ENCODE measurements at regions of chr20 and their contacts with region 1.

Region 1: GRCh38 chr20:1894951-1895673 is at the start of gene SIRPA:
- DNase-seq: peak in 1 of 2 donors; percentile 84
- H3K4me3 ChIP-seq: peak within 1 kb of the TSS; percentile 80 to 97
- H3K27ac ChIP-seq: peak within 1 kb of the TSS; percentile 97
- H3K4me1 ChIP-seq: peaks cover 6 to 66% of the 10 kb centered on the region in 2 donors
- H3K27me3 ChIP-seq: no peaks in the 10 kb centered on the region
- CTCF ChIP-seq: no peak
- total RNA-seq, gene SIRPA: 72.8 TPM

Region 2: GRCh38 chr20:1802385-1803060 is 92.6 kb before region 1 on chr20:
- intact Hi-C with region 1: loop called (anchors 1 kb)
- DNase-seq: peak in 1 of 2 donors; percentile 83
- H3K4me3 ChIP-seq: peak overlapping the region; percentile 74 to 76
- H3K27ac ChIP-seq: peak overlapping the region; percentile 52 to 69
- H3K4me1 ChIP-seq: peaks cover 4 to 6% of the 10 kb centered on the region in 2 donors
- H3K27me3 ChIP-seq: no peaks in the 10 kb centered on the region
- CTCF ChIP-seq: peak; percentile 65 to 87 (median 67)

Region 3: GRCh38 chr20:1816384-1817381 is 78.4 kb before region 1 on chr20:
- intact Hi-C with region 1: loop called (anchors 5 kb)
- DNase-seq: no peak
- H3K4me3 ChIP-seq: peak overlapping the region in 1 of 2 donors; percentile 37
- H3K27ac ChIP-seq: peak overlapping the region; percentile 80 to 92
- H3K4me1 ChIP-seq: peaks cover 34 to 65% of the 10 kb centered on the region in 2 donors
- H3K27me3 ChIP-seq: no peaks in the 10 kb centered on the region
- CTCF ChIP-seq: no peak

Region 4: GRCh38 chr20:1934721-1935573 is 39.8 kb after region 1 on chr20:
- intact Hi-C with region 1: loop called (anchors 2 kb)
- DNase-seq: peak; percentile 43 to 93
- H3K4me3 ChIP-seq: no peak overlapping the region
- H3K27ac ChIP-seq: peak overlapping the region; percentile 32 to 68
- H3K4me1 ChIP-seq: peaks cover 0 to 8% of the 10 kb centered on the region in 2 donors
- H3K27me3 ChIP-seq: no peaks in the 10 kb centered on the region
- CTCF ChIP-seq: no peak

Region 5: GRCh38 chr20:2470423-2471193 is 575.5 kb after region 1 on chr20 and contains the start of gene SNRPB:
- intact Hi-C with region 1: loop called (anchors 5 kb)
- DNase-seq: peak; percentile 88 to 99
- H3K4me3 ChIP-seq: peak within 1 kb of the TSS; percentile 76 to 81
- H3K27ac ChIP-seq: peak within 1 kb of the TSS; percentile 94 to 96
- H3K4me1 ChIP-seq: peaks cover 4 to 18% of the 10 kb centered on the region in 2 donors
- H3K27me3 ChIP-seq: no peaks in the 10 kb centered on the region
- CTCF ChIP-seq: no peak
- total RNA-seq, gene SNRPB: 83.5 TPM

Measured in ascending aorta (tissue), 2 donors.